ENCODE measurements at regions of chr17 and their contacts with region 1.

Region 1: DNA sequence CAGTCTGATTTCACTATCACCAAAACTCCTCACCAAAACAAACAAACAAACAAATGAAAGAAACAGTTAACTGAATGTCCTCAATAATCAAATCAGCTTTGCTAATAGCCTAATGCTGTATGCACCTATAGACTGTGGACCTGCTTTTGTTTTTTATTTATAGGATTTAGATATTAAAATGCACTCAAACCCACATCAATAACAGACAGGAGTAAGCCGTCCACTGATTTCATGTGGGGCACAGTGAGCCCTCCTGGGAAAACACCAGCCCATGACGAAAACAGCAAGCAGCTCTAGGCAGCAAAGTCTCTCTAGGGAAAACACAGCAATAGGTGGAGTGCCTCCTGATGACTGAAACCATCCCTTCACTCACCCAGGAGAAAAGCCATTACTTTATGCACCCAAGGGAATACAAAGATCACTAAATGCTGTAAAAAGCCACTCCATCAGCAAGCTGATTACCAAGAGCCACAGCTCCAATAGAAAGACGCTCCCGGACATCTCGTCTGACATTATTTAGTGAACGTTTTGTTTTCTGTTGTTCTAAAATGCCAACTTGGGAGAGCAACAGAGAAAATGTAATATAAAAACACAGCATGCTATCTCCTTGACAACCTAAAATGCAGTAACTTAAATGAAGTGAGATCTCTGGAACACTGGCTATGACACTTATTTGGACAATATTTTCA is 47.8 kb downstream of the ANKFY1 start:
- DNase-seq: no peak
- ATAC-seq: no peak
- H3K4me3 ChIP-seq: no peak overlapping the region
- H3K27ac ChIP-seq: no peak overlapping the region
- H3K4me1 ChIP-seq: peaks cover 18% of the 10 kb centered on the region
- H3K27me3 ChIP-seq: no peaks in the 10 kb centered on the region
- CTCF ChIP-seq: no peak
- EP300 ChIP-seq: no peak
- POLR2A ChIP-seq: no peak
- RAD21 ChIP-seq: no peak

Region 2: GRCh38 chr17:4249452-4250029 is 33.5 kb after region 1 on chr17:
- CTCF ChIA-PET with region 1: interaction called, 7 read pairs
- POLR2A ChIA-PET with region 1: no interaction called
- in situ Hi-C with region 1: no loop called
- intact Hi-C with region 1: loop called (anchors 1 kb)
- DNase-seq: peak; percentile 40
- ATAC-seq: peak; percentile 46; the same call in 1 of the 3 replicates
- H3K4me3 ChIP-seq: no peak overlapping the region
- H3K27ac ChIP-seq: no peak overlapping the region
- H3K4me1 ChIP-seq: peaks cover 28% of the 10 kb centered on the region
- H3K27me3 ChIP-seq: no peaks in the 10 kb centered on the region
- CTCF ChIP-seq: peak; percentile 46
- EP300 ChIP-seq: no peak
- POLR2A ChIP-seq: no peak
- RAD21 ChIP-seq: no peak